ENCODE measurements at regions of chr14 and their contacts with region 1.

Region 1: GRCh38 chr14:64213853-64214570 is 80.2 kb downstream of the ESR2 start:
- DNase-seq: no peak
- H3K4me3 ChIP-seq: no peak overlapping the region
- H3K27ac ChIP-seq: no peak overlapping the region
- H3K27me3 ChIP-seq: no peaks in the 10 kb centered on the region
- CTCF ChIP-seq: no peak

Region 2: DNA sequence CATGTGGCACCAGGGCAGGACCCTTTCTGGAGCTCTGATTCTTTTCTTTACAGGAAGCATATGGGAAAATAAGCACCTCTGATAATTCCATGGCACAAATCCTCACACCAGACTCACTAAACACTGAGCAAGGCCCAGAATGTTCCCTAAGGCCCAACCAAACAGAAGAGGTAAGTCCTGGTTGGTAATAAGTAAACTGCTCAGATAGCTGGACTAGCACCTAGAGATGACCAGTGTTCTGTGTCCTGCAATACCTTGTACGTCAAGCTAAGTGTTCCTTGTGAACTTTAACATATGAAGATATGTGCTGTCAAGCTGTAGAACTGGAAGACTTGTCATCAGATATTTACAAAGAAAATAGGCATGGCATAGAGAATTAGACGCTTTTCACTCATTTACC is 106.6 kb before region 1 on chr14:
- intact Hi-C with region 1: no loop called
- DNase-seq: no peak
- H3K4me3 ChIP-seq: no peak overlapping the region
- H3K27ac ChIP-seq: no peak overlapping the region
- H3K27me3 ChIP-seq: peaks cover 0 to 3% (median 0%) of the 10 kb centered on the region in 45 donors
- CTCF ChIP-seq: no peak

Region 3: GRCh38 chr14:64186231-64187129 is 27.5 kb before region 1 on chr14:
- intact Hi-C with region 1: loop called in 1 of 2 experiments (anchors 1 kb)
- DNase-seq: no peak
- H3K4me3 ChIP-seq: no peak overlapping the region
- H3K27ac ChIP-seq: no peak overlapping the region
- H3K27me3 ChIP-seq: no peaks in the 10 kb centered on the region
- CTCF ChIP-seq: no peak

Measured in dorsolateral prefrontal cortex (tissue), 120 donors.